Activated naive CD4-positive, alpha-beta T cell treated with anti-CD3 and anti-CD28 coated beads for 36 hours (primary cell): ENCODE measurements at regions of chr4 and their contacts with region 1.

Region 1: DNA sequence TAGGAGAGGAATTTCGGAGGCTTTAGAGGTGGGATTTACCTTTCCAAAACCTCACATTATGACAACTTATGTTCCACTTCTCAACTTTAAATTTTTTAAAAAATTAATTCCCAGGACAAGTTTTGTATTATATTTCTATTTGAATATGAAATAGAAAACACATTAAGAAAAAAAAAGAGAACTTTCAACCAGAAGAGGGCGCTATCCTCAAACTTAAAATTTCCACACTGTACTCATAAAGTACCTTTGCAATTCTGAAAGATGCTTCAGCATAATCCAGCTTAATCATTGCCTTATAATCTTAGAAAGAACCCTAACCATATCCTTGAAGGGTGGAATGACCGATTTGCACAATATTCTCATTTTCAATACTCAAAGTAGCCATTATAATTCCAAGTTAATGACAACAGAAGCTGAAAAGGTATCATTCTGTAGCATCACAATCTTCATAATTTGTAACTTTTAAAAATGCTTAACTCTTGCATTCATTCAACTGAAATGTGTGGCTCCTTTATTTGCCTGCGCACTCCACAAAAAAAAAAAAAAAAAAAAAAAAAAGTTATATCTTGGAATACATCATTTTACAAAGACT is 158.0 kb downstream of the KCNIP4 start:
- DNase-seq: no peak
- H3K4me3 Mint-ChIP-seq: no peak overlapping the region
- H3K27ac Mint-ChIP-seq: no peak overlapping the region
- H3K4me1 Mint-ChIP-seq: no peaks in the 10 kb centered on the region
- H3K27me3 Mint-ChIP-seq: peaks cover 1% of the 10 kb centered on the region

Region 2: GRCh38 chr4:21802406-21802805 is 11.9 kb after region 1 on chr4:
- CTCF ChIA-PET with region 1: interaction called, 11 read pairs
- intact Hi-C with region 1: no loop called
- DNase-seq: no peak
- H3K4me3 Mint-ChIP-seq: no peak overlapping the region
- H3K27ac Mint-ChIP-seq: no peak overlapping the region
- H3K4me1 Mint-ChIP-seq: no peaks in the 10 kb centered on the region
- H3K27me3 Mint-ChIP-seq: no peaks in the 10 kb centered on the region

Region 3: DNA sequence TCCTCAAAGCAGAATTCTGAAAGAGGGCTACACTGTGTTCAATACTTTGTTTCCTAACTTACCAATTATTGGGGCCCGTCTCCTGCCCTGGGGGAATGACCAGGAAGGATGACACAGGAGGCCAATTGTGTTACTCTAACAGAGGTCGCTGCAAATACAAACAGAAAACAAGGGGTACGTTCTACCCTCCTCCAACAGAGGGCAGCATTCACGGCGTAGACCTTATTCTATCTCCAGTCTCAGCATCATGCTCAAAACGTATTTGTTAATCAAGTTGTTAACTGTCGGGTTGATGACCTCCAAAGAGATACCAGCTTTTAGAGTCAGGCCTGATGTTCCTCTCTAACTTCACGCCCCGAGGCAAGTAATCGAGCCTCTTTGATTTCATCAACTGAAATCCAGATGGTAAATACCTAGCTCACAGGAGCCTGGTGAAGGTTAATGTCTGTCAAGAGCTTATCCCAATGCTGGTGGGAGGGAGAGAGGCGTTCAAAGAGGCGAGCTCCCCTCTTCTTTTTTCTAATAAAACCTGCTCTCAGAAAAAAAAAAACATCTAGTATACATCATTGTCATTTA is 339.0 kb after region 1 on chr4:
- CTCF ChIA-PET with region 1: no interaction called
- intact Hi-C with region 1: loop called (anchors 5 kb)
- DNase-seq: peak; percentile 40
- H3K4me3 Mint-ChIP-seq: no peak overlapping the region
- H3K27ac Mint-ChIP-seq: no peak overlapping the region
- H3K4me1 Mint-ChIP-seq: no peaks in the 10 kb centered on the region
- H3K27me3 Mint-ChIP-seq: peaks cover 3% of the 10 kb centered on the region

Region 4: GRCh38 chr4:22237155-22237751 is 446.7 kb after region 1 on chr4:
- CTCF ChIA-PET with region 1: interaction called, 4 read pairs
- intact Hi-C with region 1: loop called (anchors 5 kb)
- DNase-seq: peak; percentile 70
- H3K4me3 Mint-ChIP-seq: no peak overlapping the region
- H3K27ac Mint-ChIP-seq: no peak overlapping the region
- H3K4me1 Mint-ChIP-seq: no peaks in the 10 kb centered on the region
- H3K27me3 Mint-ChIP-seq: peaks cover 4% of the 10 kb centered on the region

Region 5: GRCh38 chr4:22688236-22688635 is 897.7 kb after region 1 on chr4:
- CTCF ChIA-PET with region 1: interaction called, 8 read pairs
- intact Hi-C with region 1: loop called (anchors 1 kb)
- DNase-seq: no peak
- H3K4me3 Mint-ChIP-seq: no peak overlapping the region
- H3K27ac Mint-ChIP-seq: no peak overlapping the region
- H3K4me1 Mint-ChIP-seq: peaks cover 19% of the 10 kb centered on the region
- H3K27me3 Mint-ChIP-seq: no peaks in the 10 kb centered on the region